ENCODE measurements at regions of chr7 and their contacts with region 1.

Region 1: DNA sequence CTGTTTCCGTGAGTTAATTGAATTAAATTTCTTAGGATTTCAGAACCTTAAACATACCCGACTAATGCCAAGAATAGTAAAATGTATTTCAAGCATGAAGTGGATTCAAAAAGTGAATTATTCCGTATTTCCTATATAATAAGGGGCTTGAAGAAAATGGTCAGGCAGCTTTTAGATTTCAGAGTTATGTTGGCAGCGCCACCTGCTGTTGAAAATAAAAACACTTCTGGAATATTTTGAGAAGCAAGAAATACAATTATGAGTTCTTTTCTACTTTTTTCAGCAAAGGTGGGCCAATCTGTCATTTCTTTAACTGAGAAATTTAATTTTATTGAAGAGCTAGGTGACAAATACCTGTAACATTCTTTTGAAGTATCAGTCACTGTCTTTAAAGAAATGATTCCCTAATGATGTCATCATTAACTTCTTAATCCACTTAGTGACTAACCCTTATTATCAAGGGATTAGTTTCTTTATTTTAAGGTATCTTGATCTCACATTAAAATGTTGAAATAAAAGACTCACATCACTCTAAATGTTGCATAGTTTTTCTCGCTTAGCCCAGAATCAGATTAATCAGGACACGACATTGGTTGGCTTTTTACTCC is 36.6 kb upstream of the AGR3 start:
- DNase-seq: peak in 3 of 7 donors; percentile 29 to 54 (median 37)
- H3K4me3 ChIP-seq: no peak overlapping the region
- H3K27ac ChIP-seq: no peak overlapping the region
- H3K4me1 ChIP-seq: no peaks in the 10 kb centered on the region
- H3K27me3 ChIP-seq: no peaks in the 10 kb centered on the region
- CTCF ChIP-seq: peak in 5 of 6 experiments; percentile 58 to 77 (median 65)
- POLR2A ChIP-seq: no peak

Region 2: DNA sequence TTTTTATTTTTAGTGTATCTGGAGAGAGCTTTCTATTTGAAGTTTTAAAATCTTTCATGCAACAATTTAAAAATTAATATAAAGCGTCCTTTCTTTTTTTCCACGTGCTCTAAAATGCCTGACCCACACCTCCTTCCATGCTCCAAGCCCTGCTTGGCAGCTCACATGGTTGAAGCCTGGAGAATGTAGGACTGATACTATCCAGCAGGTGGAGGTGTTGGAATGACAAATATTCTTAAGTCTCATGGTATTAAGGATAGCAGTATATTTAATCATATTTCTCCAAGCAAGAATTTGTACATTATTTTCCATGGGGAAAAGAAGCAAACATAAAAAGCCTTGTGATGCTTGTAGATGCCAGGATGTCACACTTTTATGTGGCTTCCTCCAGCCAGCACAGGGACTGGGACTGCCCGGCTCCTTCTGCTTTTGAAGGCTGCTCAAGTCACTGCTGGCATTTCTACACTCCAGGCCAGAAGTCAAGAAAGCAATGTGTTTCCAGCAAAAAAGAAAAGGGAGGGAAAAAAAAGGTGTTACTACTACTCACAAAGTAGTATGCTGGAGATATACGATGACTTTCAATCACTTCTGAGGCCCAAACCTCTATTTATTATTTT is 222.7 kb before region 1 on chr7:
- intact Hi-C with region 1: loop called (anchors 5 to 10 kb)
- DNase-seq: peak; percentile 25 to 77 (median 45)
- H3K4me3 ChIP-seq: no peak overlapping the region
- H3K27ac ChIP-seq: no peak overlapping the region
- H3K4me1 ChIP-seq: no peaks in the 10 kb centered on the region
- H3K27me3 ChIP-seq: no peaks in the 10 kb centered on the region
- CTCF ChIP-seq: peak; percentile 36 to 77 (median 70)
- POLR2A ChIP-seq: no peak

Region 3: GRCh38 chr7:16801111-16801542 is 117.3 kb before region 1 on chr7:
- intact Hi-C with region 1: loop called (anchors 10 kb)
- DNase-seq: peak in 4 of 7 donors; percentile 9 to 31 (median 22)
- H3K4me3 ChIP-seq: no peak overlapping the region
- H3K27ac ChIP-seq: no peak overlapping the region
- H3K4me1 ChIP-seq: no peaks in the 10 kb centered on the region
- H3K27me3 ChIP-seq: no peaks in the 10 kb centered on the region
- CTCF ChIP-seq: peak; percentile 24 to 54 (median 38)
- POLR2A ChIP-seq: no peak

Measured in adrenal gland (tissue), 19 donors.